Activated CD4-positive, alpha-beta T cell treated with anti-CD3 and anti-CD28 coated beads for 36 hours (primary cell): ENCODE measurements at regions of chr9 and their contacts with region 1.

Region 1: DNA sequence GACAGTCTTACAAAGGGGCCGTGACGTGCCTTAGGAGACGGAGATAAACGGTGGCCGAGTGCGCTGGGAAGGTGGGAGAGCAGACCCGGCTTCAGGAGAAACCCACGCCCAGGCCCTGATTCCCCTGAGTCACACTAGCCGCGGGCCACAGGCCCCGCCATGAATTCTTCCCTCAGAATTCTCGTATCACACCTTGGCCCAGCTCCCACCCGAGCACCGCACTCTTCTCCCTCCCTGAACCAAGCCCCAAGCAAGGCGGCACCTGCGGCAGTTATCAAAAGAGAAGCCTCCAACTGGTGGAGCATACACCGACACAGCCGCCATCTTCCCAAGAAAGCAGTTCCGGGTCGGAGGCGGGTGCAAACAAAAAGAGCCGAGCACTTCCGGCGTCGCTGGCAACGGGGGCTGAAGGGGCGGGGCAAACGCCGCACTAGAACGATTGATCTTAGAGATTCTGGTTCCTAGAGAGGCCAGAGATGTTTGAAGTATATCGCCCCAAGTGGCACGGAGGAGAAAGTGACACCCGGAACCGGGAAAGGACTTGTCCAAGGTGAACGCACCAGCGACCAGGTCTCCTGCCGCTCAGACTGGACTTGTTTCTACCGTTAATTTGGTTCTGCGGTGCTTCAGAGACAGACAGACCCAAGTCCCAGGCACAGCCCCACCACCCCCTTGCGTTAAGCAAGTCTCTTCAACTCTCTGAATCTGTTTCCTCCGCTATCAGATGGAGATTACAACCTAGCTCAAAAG is at the start of gene PSMB7:
- DNase-seq: peak; percentile 99
- ATAC-seq: peak; percentile 94
- H3K4me3 Mint-ChIP-seq: peak within 1 kb of the TSS; percentile 93
- H3K27ac Mint-ChIP-seq: peak within 1 kb of the TSS; percentile 89
- H3K4me1 Mint-ChIP-seq: peaks cover 43% of the 10 kb centered on the region
- H3K27me3 Mint-ChIP-seq: no peaks in the 10 kb centered on the region
- total RNA-seq, gene PSMB7: 143 to 164 TPM

Region 2: GRCh38 chr9:123929870-123930831 is 485.1 kb before region 1 on chr9 and contains the start of gene DENND1A:
- CTCF ChIA-PET with region 1: no interaction called
- POLR2A ChIA-PET with region 1: no interaction called
- intact Hi-C with region 1: loop called in 1 of 2 experiments (anchors 1 kb)
- DNase-seq: peak; percentile 95
- ATAC-seq: peak; percentile 86
- H3K4me3 Mint-ChIP-seq: peak within 1 kb of the TSS; percentile 80
- H3K27ac Mint-ChIP-seq: peak within 1 kb of the TSS; percentile 88
- H3K4me1 Mint-ChIP-seq: peaks cover 35% of the 10 kb centered on the region
- H3K27me3 Mint-ChIP-seq: peaks cover 2% of the 10 kb centered on the region
- total RNA-seq, gene DENND1A: 23.7 to 29.5 TPM

Region 3: GRCh38 chr9:124658165-124659017 is 243.1 kb after region 1 on chr9:
- CTCF ChIA-PET with region 1: interaction called, 3 read pairs
- POLR2A ChIA-PET with region 1: no interaction called
- intact Hi-C with region 1: loop called in 1 of 2 experiments (anchors 2 kb)
- DNase-seq: peak; percentile 73
- ATAC-seq: peak; percentile 97
- H3K4me3 Mint-ChIP-seq: peak overlapping the region; percentile 95
- H3K27ac Mint-ChIP-seq: peak overlapping the region; percentile 97
- H3K4me1 Mint-ChIP-seq: peaks cover 15% of the 10 kb centered on the region
- H3K27me3 Mint-ChIP-seq: peaks cover 2% of the 10 kb centered on the region

Region 4: GRCh38 chr9:124861342-124862229 is 446.3 kb after region 1 on chr9 and contains the starts of genes ARPC5L and RPL35:
- CTCF ChIA-PET with region 1: no interaction called
- POLR2A ChIA-PET with region 1: no interaction called
- intact Hi-C with region 1: loop called in 1 of 2 experiments (anchors 1 kb)
- DNase-seq: peak; percentile 98
- ATAC-seq: peak; percentile 95
- H3K4me3 Mint-ChIP-seq: peak within 1 kb of the TSS; percentile 95
- H3K27ac Mint-ChIP-seq: peak within 1 kb of the TSS; percentile 95
- H3K4me1 Mint-ChIP-seq: peaks cover 46% of the 10 kb centered on the region
- H3K27me3 Mint-ChIP-seq: no peaks in the 10 kb centered on the region
- total RNA-seq, gene ARPC5L: 51.9 to 95.9 TPM
- total RNA-seq, gene RPL35: 2,227 to 2,561 TPM

Region 5: DNA sequence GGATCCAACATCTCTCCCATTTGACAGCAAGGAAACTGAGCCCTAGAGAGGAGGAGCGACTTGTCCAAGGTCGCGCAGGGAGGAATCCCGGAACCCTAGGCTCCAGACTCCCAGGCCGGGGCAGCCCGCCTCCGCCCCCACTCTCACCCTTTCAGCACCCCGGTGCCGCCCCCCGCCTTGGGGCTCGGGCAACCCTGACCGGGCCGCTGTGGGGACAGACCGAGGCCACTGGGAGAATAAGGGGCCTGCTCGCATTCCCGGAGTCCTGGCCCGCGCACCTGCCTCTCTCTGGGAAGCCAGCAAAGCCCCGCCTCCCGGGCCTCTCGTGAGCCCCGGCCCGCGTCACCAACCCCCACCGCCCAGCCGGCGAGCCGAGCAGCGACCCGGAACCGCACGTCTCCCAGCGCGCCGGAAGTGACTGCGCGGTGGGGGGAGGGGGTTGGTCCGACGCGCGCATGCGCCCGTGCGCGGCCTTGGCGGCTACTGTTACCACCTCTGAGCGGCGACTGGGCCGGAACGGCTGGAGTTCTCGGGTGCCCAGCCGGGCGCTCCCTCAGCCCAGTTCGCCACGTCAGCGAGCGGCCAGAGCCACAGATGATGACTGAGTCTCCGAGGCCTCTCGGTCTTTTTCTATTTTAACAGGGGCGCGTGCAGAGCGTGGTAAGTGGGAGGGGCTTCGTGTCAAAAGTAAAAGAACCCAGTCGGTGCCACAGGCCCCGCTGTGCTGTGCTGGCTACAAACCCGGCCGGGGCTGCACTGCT is 525.6 kb after region 1 on chr9 and contains the start of gene GOLGA1:
- CTCF ChIA-PET with region 1: no interaction called
- POLR2A ChIA-PET with region 1: no interaction called
- intact Hi-C with region 1: loop called in 1 of 2 experiments (anchors 1 kb)
- DNase-seq: peak; percentile 96
- ATAC-seq: peak; percentile 89
- H3K4me3 Mint-ChIP-seq: peak within 1 kb of the TSS; percentile 93
- H3K27ac Mint-ChIP-seq: peak within 1 kb of the TSS; percentile 99
- H3K4me1 Mint-ChIP-seq: peaks cover 20% of the 10 kb centered on the region
- H3K27me3 Mint-ChIP-seq: no peaks in the 10 kb centered on the region
- total RNA-seq, gene GOLGA1: 17.4 to 18.3 TPM

Region 6: GRCh38 chr9:125261501-125262293 is 846.4 kb after region 1 on chr9 and contains the start of gene GAPVD1:
- CTCF ChIA-PET with region 1: no interaction called
- POLR2A ChIA-PET with region 1: no interaction called
- intact Hi-C with region 1: loop called in 1 of 2 experiments (anchors 10 kb)
- DNase-seq: peak; percentile 94
- ATAC-seq: peak; percentile 99
- H3K4me3 Mint-ChIP-seq: peak within 1 kb of the TSS; percentile 99
- H3K27ac Mint-ChIP-seq: peak within 1 kb of the TSS; percentile 96
- H3K4me1 Mint-ChIP-seq: peaks cover 43% of the 10 kb centered on the region
- H3K27me3 Mint-ChIP-seq: no peaks in the 10 kb centered on the region
- total RNA-seq, gene GAPVD1: 41.6 to 47.7 TPM